A673 (cell line): ENCODE measurements at regions of chr11 and their contacts with region 1.

Region 1: DNA sequence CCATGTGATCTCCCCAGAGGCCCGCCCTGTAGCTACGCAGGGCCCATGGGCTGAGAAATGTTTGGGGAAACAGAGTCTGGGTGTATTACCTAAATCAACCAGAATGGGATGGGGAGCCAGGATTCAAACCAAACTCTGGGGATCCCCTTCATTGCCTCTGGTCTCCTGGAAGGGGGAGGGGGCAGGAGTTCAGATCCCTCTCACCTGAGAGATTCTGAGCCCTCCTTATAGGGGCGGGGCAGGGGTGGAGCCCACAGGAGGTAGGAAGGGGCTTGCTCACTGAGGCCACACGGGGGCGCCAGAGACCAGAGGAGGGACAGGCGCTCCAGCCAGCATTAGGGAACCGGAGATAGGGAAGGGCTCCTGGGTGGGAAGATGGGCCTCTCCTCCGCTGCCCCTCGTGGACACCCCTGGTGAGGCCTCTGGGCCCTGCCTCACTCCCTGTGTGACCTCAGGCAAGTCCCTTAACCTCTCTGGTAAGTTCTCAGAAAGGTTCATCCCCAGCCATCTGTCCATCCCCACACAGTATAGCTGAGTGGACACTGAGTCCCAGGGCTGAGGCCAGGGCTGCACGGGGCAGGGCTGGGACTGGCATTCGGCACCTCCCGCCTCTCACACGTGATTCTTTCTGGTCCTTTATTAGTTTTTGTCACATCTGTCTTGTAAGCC is 2.7 kb upstream of the CDC42BPG start:
- DNase-seq: peak; percentile 98
- H3K4me3 ChIP-seq: no peak overlapping the region
- H3K27ac ChIP-seq: no peak overlapping the region
- H3K4me1 ChIP-seq: peaks cover 13% of the 10 kb centered on the region
- H3K27me3 ChIP-seq: no peaks in the 10 kb centered on the region
- CTCF ChIP-seq: peak; percentile 98

Region 2: DNA sequence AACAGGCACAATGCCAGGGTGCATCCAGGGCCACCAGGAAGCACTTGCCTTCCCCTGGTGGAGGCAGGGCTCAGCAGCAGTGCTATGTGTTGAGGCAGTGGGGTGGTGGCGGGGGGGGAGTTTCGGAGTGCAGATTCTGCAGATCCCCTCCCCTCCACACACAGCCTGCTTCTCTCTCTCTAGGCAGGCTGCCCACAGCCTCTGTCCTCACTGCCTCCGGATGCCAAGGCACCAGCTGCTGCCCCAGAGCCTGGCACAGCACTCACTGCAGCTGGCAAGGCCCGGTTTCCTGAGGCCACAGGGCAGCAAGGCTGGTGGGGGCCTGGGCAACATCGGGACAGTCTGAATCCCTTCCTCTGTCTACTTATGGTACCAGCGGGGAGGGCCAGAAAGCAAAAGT is 159.9 kb before region 1 on chr11:
- CTCF ChIA-PET with region 1: no interaction called
- POLR2A ChIA-PET with region 1: no interaction called
- intact Hi-C with region 1: no loop called
- DNase-seq: no peak
- H3K4me3 ChIP-seq: no peak overlapping the region
- H3K27ac ChIP-seq: no peak overlapping the region
- H3K4me1 ChIP-seq: peaks cover 5% of the 10 kb centered on the region
- H3K27me3 ChIP-seq: peaks cover 6% of the 10 kb centered on the region
- CTCF ChIP-seq: no peak

Region 3: GRCh38 chr11:64878494-64879243 is 31.5 kb after region 1 on chr11 and contains the start of gene EHD1:
- CTCF ChIA-PET with region 1: no interaction called
- POLR2A ChIA-PET with region 1: no interaction called
- intact Hi-C with region 1: loop called (anchors 1 kb)
- DNase-seq: peak; percentile 100
- H3K4me3 ChIP-seq: peak within 1 kb of the TSS; percentile 79
- H3K27ac ChIP-seq: peak within 1 kb of the TSS; percentile 93
- H3K4me1 ChIP-seq: peaks cover 17% of the 10 kb centered on the region
- H3K27me3 ChIP-seq: no peaks in the 10 kb centered on the region
- CTCF ChIP-seq: peak; percentile 74
- total RNA-seq, gene EHD1: 53.3 and 63.1 TPM in 2 replicates

Region 4: GRCh38 chr11:64894070-64894796 is 47.1 kb after region 1 on chr11:
- CTCF ChIA-PET with region 1: no interaction called
- POLR2A ChIA-PET with region 1: no interaction called
- intact Hi-C with region 1: loop called (anchors 1 kb)
- DNase-seq: peak; percentile 72
- H3K4me3 ChIP-seq: no peak overlapping the region
- H3K27ac ChIP-seq: no peak overlapping the region
- H3K4me1 ChIP-seq: no peaks in the 10 kb centered on the region
- H3K27me3 ChIP-seq: no peaks in the 10 kb centered on the region
- CTCF ChIP-seq: peak; percentile 93

Region 5: DNA sequence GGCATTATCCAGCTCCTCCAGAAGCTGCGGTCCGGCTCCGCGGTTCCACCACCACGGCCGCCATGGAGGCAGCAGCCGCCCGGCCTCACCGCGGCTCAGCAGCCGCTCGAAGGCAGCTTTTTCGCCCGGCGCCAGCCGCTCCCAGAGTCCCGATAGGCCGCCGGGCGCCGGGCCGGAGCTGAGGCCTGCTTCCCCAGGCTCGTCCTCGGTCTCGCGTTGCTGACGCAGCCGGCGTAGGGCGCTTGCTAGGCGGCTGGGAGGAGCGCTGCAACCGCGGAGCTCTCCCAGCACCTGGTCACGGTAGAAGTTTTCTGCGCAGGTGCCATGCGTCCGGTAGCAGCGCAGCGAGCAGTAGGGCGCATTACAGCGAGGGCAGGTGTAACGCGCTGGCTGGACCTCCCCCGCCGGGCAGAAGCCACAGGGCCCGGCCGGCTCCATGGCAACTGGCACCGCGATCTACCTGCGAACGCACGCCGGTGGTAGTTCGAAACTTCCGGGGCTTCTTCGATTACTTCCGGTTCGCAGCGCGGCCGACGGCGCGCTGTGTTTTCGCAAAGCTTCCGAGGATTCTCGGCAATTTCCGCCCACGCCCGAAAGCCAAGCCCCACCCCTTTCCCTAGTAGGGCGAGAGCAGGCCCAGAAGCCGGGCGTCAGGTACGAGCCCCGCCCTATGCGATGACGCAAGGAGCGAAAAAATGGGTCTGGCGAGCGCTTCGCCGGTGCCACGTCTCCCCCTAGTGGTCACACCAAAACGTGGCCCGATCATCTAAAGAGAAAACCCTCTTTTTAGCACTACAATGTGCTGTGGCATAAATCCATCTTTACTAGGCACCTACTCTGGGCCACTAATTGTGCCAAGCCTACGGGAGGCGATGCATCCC is 270.3 kb after region 1 on chr11 and contains the start of gene ZNHIT2:
- CTCF ChIA-PET with region 1: interaction called, 7 read pairs
- POLR2A ChIA-PET with region 1: no interaction called
- intact Hi-C with region 1: loop called (anchors 5 kb)
- DNase-seq: peak; percentile 100
- H3K4me3 ChIP-seq: peak within 1 kb of the TSS; percentile 95
- H3K27ac ChIP-seq: peak within 1 kb of the TSS; percentile 92
- H3K4me1 ChIP-seq: peaks cover 29% of the 10 kb centered on the region
- H3K27me3 ChIP-seq: no peaks in the 10 kb centered on the region
- CTCF ChIP-seq: peak; percentile 98
- total RNA-seq, gene ZNHIT2: 22.3 and 27.4 TPM in 2 replicates

Region 6: GRCh38 chr11:65314501-65315203 is 467.5 kb after region 1 on chr11 and contains the start of gene CDC42EP2:
- CTCF ChIA-PET with region 1: no interaction called
- POLR2A ChIA-PET with region 1: no interaction called
- intact Hi-C with region 1: loop called (anchors 10 kb)
- DNase-seq: peak; percentile 85
- H3K4me3 ChIP-seq: peak within 1 kb of the TSS; percentile 80
- H3K27ac ChIP-seq: peak within 1 kb of the TSS; percentile 71
- H3K4me1 ChIP-seq: peaks cover 15% of the 10 kb centered on the region
- H3K27me3 ChIP-seq: no peaks in the 10 kb centered on the region
- CTCF ChIP-seq: no peak
- total RNA-seq, gene CDC42EP2: 4.8 and 5.4 TPM in 2 replicates